ENCODE measurements at regions of chr5 and their contacts with region 1.

Region 1: GRCh38 chr5:60563696-60564324 is 136.2 kb downstream of the DEPDC1B start:
- DNase-seq: no peak
- H3K4me3 ChIP-seq: no peak overlapping the region
- H3K27ac ChIP-seq: no peak overlapping the region
- H3K4me1 ChIP-seq: no peaks in the 10 kb centered on the region
- CTCF ChIP-seq: no peak

Region 2: DNA sequence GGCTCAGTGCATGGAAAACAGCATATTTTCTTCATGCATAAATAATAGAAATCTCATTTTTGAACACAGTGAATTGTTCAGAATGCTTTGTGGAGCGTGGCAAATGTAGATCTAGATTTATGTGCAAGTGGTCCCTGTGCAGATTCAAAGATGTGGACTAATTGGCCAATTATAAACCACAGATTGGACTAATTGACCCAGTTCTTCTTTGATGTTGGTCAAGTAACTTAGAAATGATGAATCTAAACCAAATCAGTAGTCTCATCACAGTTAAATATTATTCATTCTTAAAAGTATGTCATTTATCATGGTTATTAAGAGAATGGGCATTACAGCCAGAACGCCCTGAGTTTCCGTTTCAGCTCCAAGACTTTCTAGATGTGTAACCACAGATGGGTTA is 658.6 kb before region 1 on chr5:
- CTCF ChIA-PET with region 1: no interaction called
- POLR2A ChIA-PET with region 1: interaction called, 13 read pairs
- intact Hi-C with region 1: no loop called
- DNase-seq: no peak
- H3K4me3 ChIP-seq: no peak overlapping the region
- H3K27ac ChIP-seq: no peak overlapping the region
- H3K4me1 ChIP-seq: no peaks in the 10 kb centered on the region
- CTCF ChIP-seq: no peak